Heart right ventricle (tissue), 16 donors: ENCODE measurements at regions of chr20 and their contacts with region 1.

Region 1: GRCh38 chr20:5100684-5101347 is 18.9 kb downstream of the PCNA start:
- DNase-seq: peak; percentile 72 to 73
- ATAC-seq: peak; percentile 63 to 84 (median 76)
- H3K4me3 ChIP-seq: no peak overlapping the region
- H3K27ac ChIP-seq: peak overlapping the region in 1 of 10 donors; percentile 32
- H3K4me1 ChIP-seq: peaks cover 0 to 6% (median 0%) of the 10 kb centered on the region in 9 donors
- H3K27me3 ChIP-seq: no peaks in the 10 kb centered on the region
- CTCF ChIP-seq: peak; percentile 85 to 94 (median 89)

Region 2: DNA sequence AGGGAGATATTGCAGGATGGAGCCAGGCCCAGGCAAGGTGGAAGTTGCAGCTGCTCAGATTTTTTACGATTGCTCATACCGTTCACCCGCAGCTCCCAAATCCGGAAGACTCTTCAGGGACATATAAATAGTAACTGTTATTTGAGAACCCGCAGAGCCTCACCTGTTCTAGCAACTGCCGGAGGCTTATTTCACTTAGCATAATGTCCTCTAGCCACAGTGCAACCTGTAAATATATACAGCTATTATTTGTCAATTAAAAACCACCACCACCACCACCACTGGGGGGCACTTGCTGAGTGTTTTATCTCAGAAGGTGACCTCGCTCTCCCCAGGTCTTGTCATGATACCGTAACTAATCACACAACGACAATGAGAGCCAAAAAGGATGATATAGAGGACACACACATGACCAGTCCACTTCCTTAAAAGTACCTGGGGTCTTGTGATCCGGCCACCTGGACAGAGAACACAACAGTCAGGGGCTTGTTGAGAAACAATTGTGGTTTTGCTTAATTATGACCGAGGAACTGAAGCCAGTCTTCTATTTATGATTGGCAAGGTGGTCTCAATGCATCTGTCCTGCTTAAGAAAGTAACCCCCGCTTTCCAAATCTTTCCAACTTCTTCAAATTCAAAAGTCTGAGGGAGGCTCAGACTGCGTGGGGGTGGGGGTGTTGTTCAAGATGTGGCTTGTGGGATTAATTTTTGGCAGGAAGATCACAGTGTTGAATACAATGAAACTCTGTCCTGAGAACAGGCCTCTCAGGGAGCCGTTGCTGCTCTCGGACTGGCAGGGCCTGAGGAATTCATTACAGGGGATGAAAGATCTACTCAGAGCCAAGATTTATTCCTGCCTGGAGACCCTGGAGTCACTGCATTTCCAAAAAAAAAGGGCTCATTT is 486.8 kb before region 1 on chr20:
- intact Hi-C with region 1: loop called in 7 of 10 experiments (anchors 5 to 10 kb)
- DNase-seq: peak; percentile 23 to 52
- ATAC-seq: peak; percentile 44 to 81 (median 68)
- H3K4me3 ChIP-seq: no peak overlapping the region
- H3K27ac ChIP-seq: peak overlapping the region in 8 of 10 donors; percentile 19 to 64 (median 41)
- H3K4me1 ChIP-seq: peaks cover 0 to 22% (median 11%) of the 10 kb centered on the region in 9 donors
- H3K27me3 ChIP-seq: no peaks in the 10 kb centered on the region
- CTCF ChIP-seq: peak in 7 of 9 donors; percentile 29 to 50 (median 42)

Region 3: DNA sequence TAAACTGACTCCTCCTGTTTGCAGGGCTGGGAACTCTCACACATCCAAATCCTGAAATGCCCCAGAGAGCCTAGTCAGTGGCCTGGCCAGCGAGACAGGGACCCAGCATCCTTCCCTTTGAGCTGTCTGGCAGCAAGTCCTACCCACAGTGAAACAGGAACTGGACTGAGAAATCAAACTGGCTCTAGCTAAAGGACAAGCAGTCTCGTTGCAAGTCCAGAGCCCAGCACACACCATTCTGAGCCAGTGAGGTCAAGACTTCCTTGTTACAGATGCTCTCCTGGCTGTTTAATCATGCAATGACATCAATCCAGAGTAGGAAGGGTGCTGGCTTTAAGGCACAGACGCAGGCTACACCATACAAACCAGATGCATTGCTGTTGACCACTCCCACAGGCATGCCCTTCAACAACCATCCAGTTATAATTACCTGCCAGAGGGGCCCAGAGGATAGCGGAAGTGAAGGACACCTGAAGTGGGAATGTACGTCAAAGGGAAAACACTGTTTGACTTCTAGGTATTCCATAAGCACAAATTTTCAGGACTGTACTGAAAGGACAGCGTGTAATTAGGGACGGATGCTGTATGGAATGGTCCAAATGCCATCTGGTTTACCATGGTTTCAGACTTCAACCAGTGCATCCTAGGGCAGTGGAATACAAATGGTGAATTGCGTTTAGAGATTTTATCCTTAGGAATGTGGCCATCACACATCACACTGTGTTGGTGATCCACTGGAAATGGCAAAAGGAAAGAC is 213.9 kb before region 1 on chr20:
- intact Hi-C with region 1: no loop called
- DNase-seq: no peak
- ATAC-seq: peak in 2 of 8 donors; percentile 44 to 47
- H3K4me3 ChIP-seq: no peak overlapping the region
- H3K27ac ChIP-seq: no peak overlapping the region
- H3K4me1 ChIP-seq: peaks cover 0 to 5% (median 0%) of the 10 kb centered on the region in 9 donors
- H3K27me3 ChIP-seq: no peaks in the 10 kb centered on the region
- CTCF ChIP-seq: no peak

Region 4: GRCh38 chr20:4956200-4956810 is 144.5 kb before region 1 on chr20:
- intact Hi-C with region 1: loop called in 4 of 10 experiments (anchors 10 kb)
- DNase-seq: no peak
- ATAC-seq: peak in 2 of 8 donors; percentile 48 to 56
- H3K4me3 ChIP-seq: no peak overlapping the region
- H3K27ac ChIP-seq: no peak overlapping the region
- H3K4me1 ChIP-seq: peaks cover 0 to 22% (median 5%) of the 10 kb centered on the region in 9 donors
- H3K27me3 ChIP-seq: no peaks in the 10 kb centered on the region
- CTCF ChIP-seq: peak; percentile 78 to 92 (median 83)

Region 5: DNA sequence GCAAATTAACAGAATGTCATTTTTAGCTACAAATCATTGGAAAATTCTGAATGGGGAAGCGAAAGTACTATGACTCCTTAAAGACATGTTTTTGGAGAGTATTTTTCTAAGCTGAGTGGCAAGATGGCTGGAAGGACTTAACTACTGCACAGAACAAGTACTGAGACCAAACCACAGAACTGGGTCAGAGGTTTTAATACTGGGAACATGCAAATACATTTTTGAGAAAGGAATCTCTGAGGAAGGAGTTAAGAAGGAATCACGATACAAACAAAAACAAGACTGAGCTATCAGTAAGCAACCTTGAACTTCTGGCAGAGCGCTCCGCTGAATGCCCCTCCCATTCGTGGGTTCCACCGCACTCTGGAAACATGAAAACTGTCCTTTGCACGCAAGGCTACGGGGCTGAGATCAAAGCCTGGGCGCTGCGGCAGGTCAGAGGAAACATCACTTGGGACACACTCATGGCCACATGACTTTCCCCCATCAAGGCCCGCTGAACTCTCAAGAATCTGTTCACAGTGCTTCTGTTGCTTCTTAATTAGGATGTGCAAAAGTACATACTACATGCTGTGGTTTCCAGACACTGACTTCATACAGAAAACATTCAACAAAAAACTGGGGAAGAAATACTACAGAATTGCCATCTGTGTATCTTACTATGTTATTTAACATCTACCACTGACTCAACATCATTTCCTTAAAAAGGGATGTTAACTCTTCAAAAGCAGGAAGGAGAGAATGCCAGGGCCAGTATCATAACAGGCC is 127.3 kb before region 1 on chr20:
- intact Hi-C with region 1: loop called in 1 of 10 experiments (anchors 10 kb)
- DNase-seq: peak; percentile 8 to 21
- ATAC-seq: peak in 7 of 8 donors; percentile 25 to 65 (median 62)
- H3K4me3 ChIP-seq: peak overlapping the region in 6 of 10 donors; percentile 5 to 41 (median 34)
- H3K27ac ChIP-seq: peak overlapping the region in 8 of 10 donors; percentile 6 to 78 (median 45)
- H3K4me1 ChIP-seq: peaks cover 0 to 35% (median 18%) of the 10 kb centered on the region in 9 donors
- H3K27me3 ChIP-seq: no peaks in the 10 kb centered on the region
- CTCF ChIP-seq: no peak

Region 6: GRCh38 chr20:5192570-5193431 is 92.0 kb after region 1 on chr20:
- intact Hi-C with region 1: no loop called
- DNase-seq: no peak
- ATAC-seq: no peak
- H3K4me3 ChIP-seq: no peak overlapping the region
- H3K27ac ChIP-seq: peak overlapping the region in 3 of 10 donors; percentile 20 to 73 (median 46)
- H3K4me1 ChIP-seq: peaks cover 6 to 39% (median 28%) of the 10 kb centered on the region in 9 donors
- H3K27me3 ChIP-seq: no peaks in the 10 kb centered on the region
- CTCF ChIP-seq: peak in 1 of 9 donors; percentile 17

Region 7: DNA sequence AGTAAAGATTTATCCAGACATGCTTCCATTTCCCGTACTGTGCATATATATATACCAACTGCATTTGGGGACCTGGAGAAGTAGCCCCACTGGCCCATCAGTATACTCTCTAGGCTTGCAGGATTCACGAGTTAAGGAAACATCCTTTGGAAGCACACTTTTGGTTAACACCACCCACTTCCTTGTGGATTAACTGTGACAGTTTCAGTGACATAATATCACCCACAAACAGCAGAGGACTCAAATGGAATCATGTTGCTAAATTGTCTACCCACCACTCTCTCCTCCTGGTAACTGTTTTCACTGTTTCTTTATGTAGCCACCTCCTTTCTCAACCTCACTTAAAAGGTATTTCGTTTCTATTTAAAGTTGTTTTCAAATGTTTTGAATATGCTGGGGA is 160.9 kb after region 1 on chr20:
- intact Hi-C with region 1: no loop called
- DNase-seq: no peak
- ATAC-seq: no peak
- H3K4me3 ChIP-seq: no peak overlapping the region
- H3K27ac ChIP-seq: no peak overlapping the region
- H3K4me1 ChIP-seq: no peaks in the 10 kb centered on the region
- H3K27me3 ChIP-seq: no peaks in the 10 kb centered on the region
- CTCF ChIP-seq: no peak